ENCODE measurements at regions of chr1 and their contacts with region 1.

Region 1: DNA sequence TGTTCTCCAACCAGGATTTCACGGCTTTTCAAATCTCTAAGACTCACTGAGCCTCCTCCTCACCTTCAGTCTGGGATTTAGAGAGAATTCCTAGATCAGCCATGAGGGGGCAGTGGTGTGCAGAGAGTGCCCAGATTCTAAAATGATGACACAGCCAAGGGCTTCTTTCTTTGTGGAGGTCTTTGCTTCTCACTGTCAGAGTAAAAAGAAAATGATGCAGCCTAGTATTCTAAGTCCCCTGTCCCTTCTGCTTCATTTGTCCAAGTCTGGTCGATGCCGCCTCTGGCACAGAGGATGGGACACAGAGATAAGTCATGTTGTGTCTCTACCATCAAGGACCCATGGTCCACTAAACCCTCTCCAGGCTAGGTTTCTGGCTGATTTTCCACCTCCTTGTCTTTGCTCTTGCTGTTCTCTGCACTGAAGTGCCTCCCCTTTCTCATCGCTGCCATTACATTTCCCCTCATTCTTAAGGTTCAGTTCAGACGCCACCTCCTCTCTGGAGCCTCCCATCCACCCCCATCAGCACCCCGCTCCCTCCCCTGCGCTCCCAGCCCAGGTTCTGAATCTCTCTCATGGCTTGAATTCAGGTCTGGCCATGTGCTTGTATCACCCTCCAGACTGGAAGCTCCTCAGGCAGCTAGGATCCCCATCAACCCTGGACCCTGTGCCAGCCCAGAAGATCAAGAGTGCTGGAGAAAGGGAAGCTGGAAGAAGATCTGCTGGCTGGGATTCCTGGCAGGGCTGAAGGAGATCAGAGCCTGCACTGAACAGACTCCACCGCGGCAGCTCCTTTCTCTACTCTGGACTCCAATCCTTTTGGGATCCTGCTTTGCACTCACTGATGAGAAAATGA is 12.0 kb upstream of the TINAGL1 start:
- DNase-seq: peak in 5 of 7 donors; percentile 51 to 83 (median 67)
- H3K4me3 ChIP-seq: no peak overlapping the region
- H3K27ac ChIP-seq: no peak overlapping the region
- H3K4me1 ChIP-seq: peaks cover 9 to 12% of the 10 kb centered on the region in 2 donors
- H3K27me3 ChIP-seq: no peaks in the 10 kb centered on the region
- CTCF ChIP-seq: peak; percentile 77 to 90 (median 88)
- POLR2A ChIP-seq: no peak

Region 2: GRCh38 chr1:31593770-31594632 is 29.6 kb after region 1 on chr1:
- intact Hi-C with region 1: loop called (anchors 2 kb)
- DNase-seq: peak; percentile 82 to 92 (median 88)
- H3K4me3 ChIP-seq: no peak overlapping the region
- H3K27ac ChIP-seq: no peak overlapping the region
- H3K4me1 ChIP-seq: peaks cover 0 to under 1% of the 10 kb centered on the region in 2 donors
- H3K27me3 ChIP-seq: no peaks in the 10 kb centered on the region
- CTCF ChIP-seq: peak; percentile 86 to 95 (median 90)
- POLR2A ChIP-seq: no peak

Region 3: GRCh38 chr1:31789259-31790065 is 225.1 kb after region 1 on chr1:
- intact Hi-C with region 1: loop called in 1 of 2 experiments (anchors 10 kb)
- DNase-seq: peak; percentile 92 to 98 (median 95)
- H3K4me3 ChIP-seq: peak overlapping the region in 2 of 4 donors; percentile 69 to 72
- H3K27ac ChIP-seq: peak overlapping the region in 3 of 5 donors; percentile 71 to 95 (median 80)
- H3K4me1 ChIP-seq: no peaks in the 10 kb centered on the region
- H3K27me3 ChIP-seq: no peaks in the 10 kb centered on the region
- CTCF ChIP-seq: peak; percentile 76 to 98 (median 92)
- POLR2A ChIP-seq: no peak

Measured in adrenal gland (tissue), 19 donors.